ENCODE measurements at regions of chr20 and their contacts with region 1.

Region 1: DNA sequence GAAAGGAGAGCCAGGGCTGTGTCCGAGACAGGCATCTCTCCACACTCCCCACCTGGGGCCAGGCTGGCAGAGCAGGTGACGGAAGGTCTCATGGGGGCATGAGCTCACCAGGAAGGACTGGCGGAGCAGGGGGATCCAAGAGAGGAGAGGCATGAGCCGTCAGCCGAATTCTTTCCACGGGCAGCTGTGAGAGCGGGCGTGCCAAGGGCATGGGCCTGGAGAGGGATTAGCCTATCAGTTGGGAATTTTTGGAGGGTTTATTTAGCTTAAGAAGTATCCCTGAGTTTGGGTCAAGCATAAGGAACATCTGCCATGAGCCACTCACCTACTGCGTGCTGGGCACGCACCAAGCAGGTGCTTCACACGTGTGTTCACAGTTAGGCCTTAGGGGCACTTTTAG is 60.2 kb upstream of the ZNFX1 start:
- DNase-seq: no peak

Region 2: DNA sequence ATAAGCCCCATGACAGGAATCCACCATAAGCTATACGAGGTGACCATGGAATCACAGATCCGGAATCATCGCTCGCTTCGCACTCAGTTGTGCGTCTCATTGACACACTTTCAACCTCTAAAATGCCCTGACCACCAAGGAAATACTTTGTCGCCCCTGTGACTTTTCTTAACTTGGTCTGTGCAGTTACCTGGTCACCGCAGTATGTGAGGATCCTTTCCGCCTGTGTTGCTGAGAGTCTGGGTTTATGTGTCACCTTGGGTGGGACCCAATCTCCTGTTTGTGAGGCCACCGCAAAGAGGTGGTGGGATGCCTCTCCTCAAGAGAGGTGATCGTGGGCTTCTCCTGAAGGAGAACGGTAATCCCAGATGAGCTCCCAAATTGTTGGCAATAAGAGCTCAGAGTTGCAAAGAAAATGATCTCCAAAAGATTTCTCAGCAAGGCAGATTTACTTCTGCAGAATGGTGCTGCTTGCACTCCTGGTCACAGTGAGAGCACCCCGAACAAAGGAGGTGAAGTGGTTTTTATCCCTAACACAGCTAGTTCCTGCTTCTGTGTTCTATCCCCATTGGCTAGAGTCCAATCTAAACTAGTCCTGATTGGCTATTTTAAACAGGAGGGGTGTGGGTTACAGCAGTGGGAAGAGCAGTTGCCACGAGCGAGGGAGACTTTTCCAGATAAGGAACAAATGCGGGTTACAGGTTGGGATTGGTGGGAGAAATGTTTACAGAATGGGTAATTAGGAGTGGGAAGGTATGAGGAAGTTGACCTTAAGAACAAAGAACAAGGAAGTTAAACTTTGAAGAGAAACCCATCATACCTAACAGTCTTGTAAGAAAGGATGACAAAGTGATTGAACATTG is 51.1 kb before region 1 on chr20:
- intact Hi-C with region 1: no loop called
- DNase-seq: no peak

Region 3: GRCh38 chr20:49484180-49485140 is 146.4 kb after region 1 on chr20:
- intact Hi-C with region 1: loop called (anchors 2 kb)
- DNase-seq: no peak

Region 4: GRCh38 chr20:49534255-49534712 is 196.2 kb after region 1 on chr20:
- intact Hi-C with region 1: loop called (anchors 1 kb)
- DNase-seq: no peak